CD14-positive monocyte (primary cell): ENCODE measurements at regions of chr19 and their contacts with region 1.

Region 1: GRCh38 chr19:44689056-44689895 is 9.7 kb upstream of the CEACAM16 start:
- DNase-seq: peak; percentile 54 to 75 (median 60)
- H3K4me3 ChIP-seq: no peak overlapping the region
- H3K4me3 Mint-ChIP-seq: peak overlapping the region; percentile 24 to 60
- H3K27ac ChIP-seq: no peak overlapping the region
- H3K27ac Mint-ChIP-seq: peak overlapping the region in 6 of 7 donors; percentile 40 to 90 (median 62)
- H3K4me1 ChIP-seq: peaks cover 74 to 84% of the 10 kb centered on the region in 2 donors
- H3K4me1 Mint-ChIP-seq: peaks cover 77% of the 10 kb centered on the region
- H3K27me3 ChIP-seq: no peaks in the 10 kb centered on the region
- H3K27me3 Mint-ChIP-seq: peaks cover 3 to 5% (median 3%) of the 10 kb centered on the region in 3 donors
- CTCF ChIP-seq: peak; percentile 97

Region 2: GRCh38 chr19:44737238-44738071 is 48.2 kb after region 1 on chr19:
- intact Hi-C with region 1: loop called (anchors 5 kb)
- DNase-seq: peak in 2 of 3 donors; percentile 42 to 50
- H3K4me3 ChIP-seq: no peak overlapping the region
- H3K4me3 Mint-ChIP-seq: peak overlapping the region; percentile 30 to 34
- H3K27ac ChIP-seq: peak overlapping the region; percentile 81 to 88
- H3K27ac Mint-ChIP-seq: peak overlapping the region; percentile 88 to 97 (median 94)
- H3K4me1 ChIP-seq: peaks cover 83 to 91% of the 10 kb centered on the region in 2 donors
- H3K4me1 Mint-ChIP-seq: peaks cover 78% of the 10 kb centered on the region
- H3K27me3 ChIP-seq: no peaks in the 10 kb centered on the region
- H3K27me3 Mint-ChIP-seq: peaks cover 0 to 2% (median 0%) of the 10 kb centered on the region in 3 donors
- CTCF ChIP-seq: no peak

Region 3: DNA sequence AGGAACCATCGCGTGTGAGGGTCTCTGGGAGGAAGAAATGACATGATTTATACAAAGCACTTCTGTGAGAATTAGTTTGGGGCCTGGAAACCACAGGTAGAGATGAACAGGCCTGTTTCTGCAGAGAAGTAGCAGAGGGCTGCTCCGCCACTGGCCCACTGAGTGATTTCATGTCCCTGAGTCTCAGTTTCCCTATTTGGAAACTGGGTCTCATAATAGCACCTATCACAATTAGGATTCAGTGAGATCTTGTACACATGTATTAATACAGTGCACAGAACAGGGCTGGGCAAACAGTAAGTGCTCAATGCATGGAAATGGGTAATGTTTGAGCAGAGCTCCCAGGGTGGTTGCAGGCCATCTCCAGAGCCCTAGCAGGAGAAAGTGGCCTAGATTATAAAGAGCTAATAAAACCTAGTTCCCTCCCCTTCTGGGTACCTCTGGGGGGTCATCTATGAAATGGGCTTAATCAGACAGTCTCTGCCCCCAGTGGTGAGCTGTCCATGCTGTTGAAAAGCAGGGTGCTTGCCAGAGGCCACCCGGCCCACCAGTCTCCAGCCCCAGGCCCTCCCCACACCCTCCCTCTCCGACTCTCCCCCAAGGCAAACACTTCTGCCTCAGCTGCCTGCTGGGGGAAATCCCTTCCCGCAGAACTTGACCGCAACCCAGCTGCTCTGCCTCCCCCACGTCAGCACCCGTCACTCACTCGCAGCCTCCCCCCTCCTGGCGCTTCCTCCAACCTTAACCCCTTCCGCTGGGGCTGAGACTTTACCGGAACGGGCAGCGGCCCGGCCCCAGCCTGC is 63.7 kb after region 1 on chr19:
- intact Hi-C with region 1: loop called (anchors 5 kb)
- DNase-seq: peak; percentile 95 to 98 (median 98)
- H3K4me3 ChIP-seq: peak overlapping the region; percentile 64 to 96 (median 73)
- H3K4me3 Mint-ChIP-seq: peak overlapping the region; percentile 79 to 90
- H3K27ac ChIP-seq: peak overlapping the region; percentile 97 to 99
- H3K27ac Mint-ChIP-seq: peak overlapping the region; percentile 98 to 100 (median 99)
- H3K4me1 ChIP-seq: peaks cover 64 to 70% of the 10 kb centered on the region in 2 donors
- H3K4me1 Mint-ChIP-seq: peaks cover 64% of the 10 kb centered on the region
- H3K27me3 ChIP-seq: no peaks in the 10 kb centered on the region
- H3K27me3 Mint-ChIP-seq: peaks cover 0 to 3% (median 2%) of the 10 kb centered on the region in 3 donors
- CTCF ChIP-seq: peak; percentile 7

Region 4: GRCh38 chr19:44770550-44771257 is 81.4 kb after region 1 on chr19:
- intact Hi-C with region 1: loop called in 1 of 2 experiments (anchors 5 kb)
- DNase-seq: peak; percentile 94 to 99 (median 98)
- H3K4me3 ChIP-seq: peak overlapping the region in 1 of 3 experiments; percentile 46
- H3K4me3 Mint-ChIP-seq: peak overlapping the region; percentile 69 to 74
- H3K27ac ChIP-seq: peak overlapping the region in 1 of 2 donors; percentile 64
- H3K27ac Mint-ChIP-seq: peak overlapping the region; percentile 81 to 97 (median 93)
- H3K4me1 ChIP-seq: peaks cover 35 to 40% of the 10 kb centered on the region in 2 donors
- H3K4me1 Mint-ChIP-seq: peaks cover 40% of the 10 kb centered on the region
- H3K27me3 ChIP-seq: no peaks in the 10 kb centered on the region
- H3K27me3 Mint-ChIP-seq: peaks cover 0 to 23% (median 8%) of the 10 kb centered on the region in 3 donors
- CTCF ChIP-seq: peak; percentile 76